ENCODE measurements at regions of chr6 and their contacts with region 1.

Region 1: DNA sequence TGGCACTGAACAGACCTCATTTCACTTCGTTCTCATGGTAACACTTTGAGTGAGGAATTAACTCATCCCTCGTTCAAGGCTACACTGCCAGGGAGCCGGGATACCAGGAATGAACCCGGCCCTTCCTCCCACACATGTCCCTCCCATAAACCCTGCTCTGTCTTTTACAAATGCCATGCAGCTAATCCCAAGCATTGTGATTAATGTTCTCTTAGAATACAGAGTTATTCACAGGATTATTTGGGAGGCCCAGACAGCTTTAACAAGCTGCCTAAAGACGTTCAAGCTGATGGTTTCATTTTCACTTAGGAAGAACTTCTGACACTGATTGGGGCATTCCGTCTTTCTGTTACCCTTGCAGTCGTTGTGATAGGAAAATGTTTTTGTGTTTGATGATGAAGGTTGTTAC is 42.5 kb upstream of the CD83 start:
- DNase-seq: peak; percentile 82
- H3K4me3 Mint-ChIP-seq: peak overlapping the region; percentile 69
- H3K27ac Mint-ChIP-seq: peak overlapping the region; percentile 83
- H3K4me1 Mint-ChIP-seq: peaks cover 54% of the 10 kb centered on the region
- H3K27me3 Mint-ChIP-seq: no peaks in the 10 kb centered on the region

Region 2: DNA sequence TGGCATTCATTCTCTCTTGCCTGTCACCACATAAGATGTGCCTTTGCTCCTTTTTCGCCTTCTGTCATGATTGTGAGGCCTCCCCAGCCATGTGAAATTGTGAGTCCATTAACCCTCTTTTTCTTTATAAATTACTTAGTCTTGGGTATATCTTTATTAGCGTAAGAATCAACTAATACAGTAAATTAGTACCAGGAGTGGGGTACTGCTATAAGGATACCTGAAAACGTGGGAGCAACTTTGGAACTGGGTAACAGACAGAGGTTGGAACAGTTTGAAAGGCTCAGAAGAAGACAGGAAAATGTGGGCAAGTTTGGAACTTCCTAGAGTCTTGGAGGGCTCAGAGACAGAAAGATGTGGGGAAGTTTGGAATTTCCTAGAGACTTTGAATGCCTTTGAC is 103.8 kb before region 1 on chr6:
- intact Hi-C with region 1: no loop called
- DNase-seq: no peak
- H3K4me3 Mint-ChIP-seq: no peak overlapping the region
- H3K27ac Mint-ChIP-seq: no peak overlapping the region
- H3K4me1 Mint-ChIP-seq: no peaks in the 10 kb centered on the region
- H3K27me3 Mint-ChIP-seq: peaks cover 14% of the 10 kb centered on the region

Region 3: DNA sequence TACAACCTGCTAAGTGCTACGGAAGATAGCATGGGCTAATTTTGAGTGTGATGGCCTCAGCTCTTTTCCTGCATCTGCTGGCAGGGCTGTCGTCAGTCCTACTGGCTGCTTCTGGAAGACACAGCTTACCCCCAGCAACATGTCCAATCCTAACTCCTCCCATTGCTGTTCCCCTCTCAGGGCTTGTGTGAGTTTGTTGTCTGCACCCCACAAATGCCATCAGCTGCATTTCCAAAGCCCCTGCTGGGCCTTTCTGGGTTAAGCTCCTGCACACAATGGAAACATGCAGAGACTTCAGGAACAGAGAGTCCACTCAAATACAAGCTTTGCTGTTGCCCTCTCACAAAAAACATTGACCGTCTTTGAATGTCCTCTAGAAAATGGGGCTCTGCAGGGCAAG is 65.7 kb before region 1 on chr6:
- intact Hi-C with region 1: no loop called
- DNase-seq: no peak
- H3K4me3 Mint-ChIP-seq: no peak overlapping the region
- H3K27ac Mint-ChIP-seq: no peak overlapping the region
- H3K4me1 Mint-ChIP-seq: no peaks in the 10 kb centered on the region
- H3K27me3 Mint-ChIP-seq: peaks cover 14% of the 10 kb centered on the region

Region 4: GRCh38 chr6:14089224-14089623 is 14.1 kb after region 1 on chr6:
- intact Hi-C with region 1: loop called (anchors 1 kb)
- DNase-seq: no peak
- H3K4me3 Mint-ChIP-seq: no peak overlapping the region
- H3K27ac Mint-ChIP-seq: no peak overlapping the region
- H3K4me1 Mint-ChIP-seq: peaks cover 31% of the 10 kb centered on the region
- H3K27me3 Mint-ChIP-seq: peaks cover 3% of the 10 kb centered on the region

Region 5: DNA sequence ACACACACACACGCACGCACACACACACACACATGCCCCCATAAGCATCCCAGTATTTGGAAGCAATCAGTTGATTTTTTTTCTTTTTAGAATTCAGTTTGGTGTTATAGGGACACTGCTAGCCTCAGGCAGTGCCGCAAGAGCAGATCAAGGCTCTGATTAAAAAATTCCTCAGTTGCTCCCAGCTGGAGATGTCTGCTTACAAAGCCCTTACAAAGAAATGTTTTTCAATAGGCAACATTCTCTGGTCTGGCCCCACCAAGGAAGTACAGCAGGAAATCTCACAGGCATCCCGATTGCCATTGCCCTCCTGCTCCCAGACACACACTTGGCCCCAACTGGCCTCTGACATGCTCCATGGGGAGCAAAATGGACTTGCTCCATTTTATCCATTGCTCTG is 19.6 kb after region 1 on chr6:
- intact Hi-C with region 1: loop called (anchors 1 kb)
- DNase-seq: no peak
- H3K4me3 Mint-ChIP-seq: no peak overlapping the region
- H3K27ac Mint-ChIP-seq: peak overlapping the region; percentile 79
- H3K4me1 Mint-ChIP-seq: peaks cover 41% of the 10 kb centered on the region
- H3K27me3 Mint-ChIP-seq: no peaks in the 10 kb centered on the region

Region 6: GRCh38 chr6:14108571-14109410 is 33.7 kb after region 1 on chr6:
- intact Hi-C with region 1: loop called (anchors 1 kb)
- DNase-seq: peak; percentile 66
- H3K4me3 Mint-ChIP-seq: peak overlapping the region; percentile 74
- H3K27ac Mint-ChIP-seq: peak overlapping the region; percentile 90
- H3K4me1 Mint-ChIP-seq: peaks cover 28% of the 10 kb centered on the region
- H3K27me3 Mint-ChIP-seq: peaks cover 10% of the 10 kb centered on the region

Region 7: DNA sequence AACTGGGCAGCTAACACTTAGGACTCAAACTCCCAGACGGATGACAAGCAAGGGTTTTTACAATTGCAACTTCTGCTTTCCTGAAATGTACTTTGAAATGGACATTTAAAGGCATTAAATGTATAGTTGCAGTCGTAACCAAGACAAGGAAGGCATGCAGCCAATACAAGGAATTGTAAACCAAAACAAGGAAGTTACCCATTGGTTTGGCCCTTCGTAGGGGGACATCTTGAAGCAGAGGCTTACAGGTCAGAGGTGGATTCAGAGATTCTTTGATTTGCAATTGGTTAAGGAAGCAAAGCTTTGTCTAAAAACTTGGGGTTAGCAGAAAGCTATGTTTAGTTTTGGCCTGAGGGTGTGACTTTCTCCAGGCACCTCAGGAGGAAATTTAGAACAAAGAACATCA is 308.4 kb after region 1 on chr6:
- intact Hi-C with region 1: no loop called
- DNase-seq: no peak
- H3K4me3 Mint-ChIP-seq: no peak overlapping the region
- H3K27ac Mint-ChIP-seq: no peak overlapping the region
- H3K4me1 Mint-ChIP-seq: peaks cover 33% of the 10 kb centered on the region
- H3K27me3 Mint-ChIP-seq: no peaks in the 10 kb centered on the region

Measured in activated CD4-positive, alpha-beta T cell treated with anti-CD3 and anti-CD28 coated beads, Interleukin-2, amount 10 ng/mL, durations not matched to agents 24 days and 14 days (primary cell).